ENCODE measurements at regions of chr3 and their contacts with region 1.

Region 1: DNA sequence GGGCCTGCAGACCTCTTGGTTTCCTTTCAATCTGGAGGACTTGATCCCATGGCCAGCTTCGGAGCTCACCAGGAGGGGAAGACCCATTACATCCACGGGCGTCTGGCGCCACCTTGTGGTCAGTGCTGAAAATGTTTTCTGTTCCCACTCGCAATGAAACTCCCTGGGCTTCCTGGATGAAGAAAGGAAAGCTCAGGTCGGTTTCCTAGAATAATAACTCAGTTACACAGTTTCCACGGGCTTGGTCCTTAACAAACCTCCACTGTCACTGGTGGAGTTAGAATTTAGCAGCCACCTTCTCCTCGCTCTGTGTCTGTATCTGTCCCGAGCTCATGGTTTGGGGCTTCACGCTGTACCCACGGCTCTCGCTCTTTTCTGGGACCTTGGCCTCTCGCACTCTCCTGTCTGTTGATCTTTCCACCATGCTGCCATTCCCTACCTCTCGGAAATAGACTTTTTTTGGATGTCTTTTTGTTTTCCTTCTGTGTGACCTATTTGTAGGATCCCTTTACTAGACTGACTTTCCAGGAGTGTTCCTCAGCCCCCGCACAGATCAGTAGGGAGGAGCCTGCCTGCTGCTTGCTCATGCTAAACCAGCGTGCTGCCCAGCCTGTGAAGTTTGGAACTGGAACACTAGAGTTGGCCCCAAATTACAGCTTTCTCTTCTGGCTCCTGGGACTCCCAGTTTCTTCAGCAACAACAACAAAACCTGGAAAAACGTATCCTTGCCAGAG is 56.3 kb downstream of the IL20RB start:
- DNase-seq: peak; percentile 67 to 91 (median 82)
- ATAC-seq: peak; percentile 89
- H3K4me3 ChIP-seq: peak overlapping the region; percentile 42
- H3K4me3 Mint-ChIP-seq: peak overlapping the region; percentile 67
- H3K27ac ChIP-seq: no peak overlapping the region
- H3K27ac Mint-ChIP-seq: no peak overlapping the region
- H3K4me1 ChIP-seq: peaks cover 9% of the 10 kb centered on the region
- H3K4me1 Mint-ChIP-seq: peaks cover 9% of the 10 kb centered on the region
- H3K27me3 ChIP-seq: no peaks in the 10 kb centered on the region
- H3K27me3 Mint-ChIP-seq: no peaks in the 10 kb centered on the region
- CTCF ChIP-seq: peak; percentile 87

Region 2: GRCh38 chr3:136255672-136256406 is 758.3 kb before region 1 on chr3:
- CTCF ChIA-PET with region 1: no interaction called
- POLR2A ChIA-PET with region 1: no interaction called
- intact Hi-C with region 1: loop called in 1 of 2 experiments (anchors 5 kb)
- DNase-seq: no peak
- ATAC-seq: no peak
- H3K4me3 ChIP-seq: no peak overlapping the region
- H3K4me3 Mint-ChIP-seq: no peak overlapping the region
- H3K27ac ChIP-seq: no peak overlapping the region
- H3K27ac Mint-ChIP-seq: no peak overlapping the region
- H3K4me1 ChIP-seq: peaks cover 14% of the 10 kb centered on the region
- H3K4me1 Mint-ChIP-seq: peaks cover 17% of the 10 kb centered on the region
- H3K27me3 ChIP-seq: no peaks in the 10 kb centered on the region
- H3K27me3 Mint-ChIP-seq: no peaks in the 10 kb centered on the region
- CTCF ChIP-seq: no peak

Region 3: GRCh38 chr3:136305878-136306277 is 708.2 kb before region 1 on chr3:
- CTCF ChIA-PET with region 1: interaction called, 10 read pairs
- POLR2A ChIA-PET with region 1: no interaction called
- intact Hi-C with region 1: loop called in 1 of 2 experiments (anchors 10 kb)
- DNase-seq: no peak
- ATAC-seq: no peak
- H3K4me3 ChIP-seq: no peak overlapping the region
- H3K4me3 Mint-ChIP-seq: no peak overlapping the region
- H3K27ac ChIP-seq: no peak overlapping the region
- H3K27ac Mint-ChIP-seq: no peak overlapping the region
- H3K4me1 ChIP-seq: no peaks in the 10 kb centered on the region
- H3K4me1 Mint-ChIP-seq: no peaks in the 10 kb centered on the region
- H3K27me3 ChIP-seq: no peaks in the 10 kb centered on the region
- H3K27me3 Mint-ChIP-seq: no peaks in the 10 kb centered on the region
- CTCF ChIP-seq: no peak

Region 4: GRCh38 chr3:136390574-136390973 is 623.5 kb before region 1 on chr3:
- CTCF ChIA-PET with region 1: interaction called, 29 read pairs
- POLR2A ChIA-PET with region 1: interaction called, 3 read pairs
- intact Hi-C with region 1: loop called (anchors 2 kb)
- DNase-seq: no peak
- ATAC-seq: no peak
- H3K4me3 ChIP-seq: no peak overlapping the region
- H3K4me3 Mint-ChIP-seq: no peak overlapping the region
- H3K27ac ChIP-seq: no peak overlapping the region
- H3K27ac Mint-ChIP-seq: no peak overlapping the region
- H3K4me1 ChIP-seq: peaks cover 3% of the 10 kb centered on the region
- H3K4me1 Mint-ChIP-seq: no peaks in the 10 kb centered on the region
- H3K27me3 ChIP-seq: no peaks in the 10 kb centered on the region
- H3K27me3 Mint-ChIP-seq: no peaks in the 10 kb centered on the region
- CTCF ChIP-seq: no peak

Region 5: GRCh38 chr3:136545664-136546268 is 468.4 kb before region 1 on chr3:
- CTCF ChIA-PET with region 1: interaction called, 5 read pairs
- POLR2A ChIA-PET with region 1: no interaction called
- intact Hi-C with region 1: loop called in 1 of 2 experiments (anchors 5 kb)
- DNase-seq: peak in 1 of 14 experiments; percentile 11
- ATAC-seq: no peak
- H3K4me3 ChIP-seq: no peak overlapping the region
- H3K4me3 Mint-ChIP-seq: no peak overlapping the region
- H3K27ac ChIP-seq: no peak overlapping the region
- H3K27ac Mint-ChIP-seq: no peak overlapping the region
- H3K4me1 ChIP-seq: no peaks in the 10 kb centered on the region
- H3K4me1 Mint-ChIP-seq: peaks cover 43% of the 10 kb centered on the region
- H3K27me3 ChIP-seq: no peaks in the 10 kb centered on the region
- H3K27me3 Mint-ChIP-seq: no peaks in the 10 kb centered on the region
- CTCF ChIP-seq: no peak

Region 6: DNA sequence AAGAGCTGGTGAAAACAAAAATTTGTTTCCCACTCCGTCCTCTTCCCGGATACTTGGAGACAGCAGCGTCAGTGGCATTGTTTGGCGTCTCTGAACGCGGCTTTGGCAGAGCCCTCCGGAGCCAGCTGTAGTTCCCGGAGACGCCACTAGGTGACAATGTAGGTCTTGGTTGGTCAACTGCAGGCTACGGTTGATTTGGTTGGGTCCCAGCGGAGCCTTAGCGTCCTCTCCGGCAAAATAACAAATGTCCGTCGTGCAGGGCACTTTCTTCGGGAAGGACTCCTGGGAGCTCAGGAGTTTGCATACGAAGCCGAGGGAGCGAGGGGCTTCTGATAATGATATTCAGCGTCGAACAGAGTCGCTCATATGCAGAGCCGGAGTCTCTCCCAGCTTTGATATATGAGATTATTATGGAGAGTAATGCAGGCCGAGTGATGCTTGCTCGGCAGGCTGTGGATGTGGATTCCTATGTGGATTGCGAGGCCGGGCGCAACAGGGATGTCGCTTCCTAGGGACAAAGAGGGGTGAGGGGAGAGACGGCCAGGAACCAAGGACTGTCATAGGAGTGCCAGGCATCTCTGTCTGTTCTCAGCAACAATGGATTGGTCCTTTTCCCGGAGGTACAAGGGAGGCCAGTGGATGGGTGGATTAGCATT is 18.5 kb after region 1 on chr3:
- CTCF ChIA-PET with region 1: interaction called, 10 read pairs
- POLR2A ChIA-PET with region 1: no interaction called
- intact Hi-C with region 1: no loop called
- DNase-seq: peak; percentile 52 to 85 (median 66)
- ATAC-seq: peak; percentile 81
- H3K4me3 ChIP-seq: peak overlapping the region; percentile 28
- H3K4me3 Mint-ChIP-seq: peak overlapping the region; percentile 71
- H3K27ac ChIP-seq: no peak overlapping the region
- H3K27ac Mint-ChIP-seq: no peak overlapping the region
- H3K4me1 ChIP-seq: peaks cover 8% of the 10 kb centered on the region
- H3K4me1 Mint-ChIP-seq: peaks cover 9% of the 10 kb centered on the region
- H3K27me3 ChIP-seq: peaks cover 5 to 20% of the 10 kb centered on the region in 2 experiments
- H3K27me3 Mint-ChIP-seq: peaks cover 38% of the 10 kb centered on the region
- CTCF ChIP-seq: peak; percentile 99

Region 7: DNA sequence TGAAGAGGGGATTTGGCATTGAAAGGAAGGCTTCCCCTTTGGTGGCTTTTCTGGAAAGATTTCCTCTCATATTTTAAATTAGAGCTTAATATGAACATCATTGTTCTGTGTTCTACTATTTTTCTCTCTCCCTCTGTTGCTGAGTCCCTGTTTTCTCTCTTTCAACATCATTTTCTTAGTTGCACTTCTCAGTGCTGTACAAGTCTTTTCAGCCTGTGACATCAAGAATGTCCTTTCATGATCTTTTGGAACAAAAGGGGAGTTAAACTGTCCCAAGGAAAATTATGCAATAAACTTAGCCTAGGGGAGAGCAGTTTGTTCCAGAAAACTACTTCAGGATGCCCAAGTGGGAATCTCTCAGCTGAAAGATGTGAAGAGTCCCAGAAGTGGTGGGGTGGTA is 268.7 kb after region 1 on chr3:
- CTCF ChIA-PET with region 1: no interaction called
- POLR2A ChIA-PET with region 1: no interaction called
- intact Hi-C with region 1: no loop called
- DNase-seq: no peak
- ATAC-seq: no peak
- H3K4me3 ChIP-seq: no peak overlapping the region
- H3K4me3 Mint-ChIP-seq: no peak overlapping the region
- H3K27ac ChIP-seq: no peak overlapping the region
- H3K27ac Mint-ChIP-seq: no peak overlapping the region
- H3K4me1 ChIP-seq: no peaks in the 10 kb centered on the region
- H3K4me1 Mint-ChIP-seq: no peaks in the 10 kb centered on the region
- H3K27me3 ChIP-seq: no peaks in the 10 kb centered on the region
- H3K27me3 Mint-ChIP-seq: peaks cover 4% of the 10 kb centered on the region
- CTCF ChIP-seq: no peak

Region 8: DNA sequence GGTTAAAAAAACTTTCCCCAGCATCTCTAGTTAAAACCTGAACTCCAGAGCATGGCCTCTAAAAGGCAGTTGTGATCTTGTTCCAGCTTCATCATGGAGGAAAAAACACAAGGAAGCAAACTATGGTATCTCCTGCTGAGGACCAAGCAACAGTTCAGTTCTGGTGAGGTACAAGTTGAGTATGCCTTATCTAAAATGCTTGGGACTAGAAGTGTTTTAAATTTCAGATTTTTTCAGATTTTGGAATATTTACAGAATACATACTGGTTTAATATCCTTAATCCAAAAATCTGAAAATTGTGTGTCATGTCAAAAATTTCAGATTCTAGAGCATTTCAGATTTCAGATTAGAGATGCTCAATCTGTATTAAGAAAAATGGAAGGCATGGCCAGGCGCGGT is 1150.9 kb after region 1 on chr3:
- CTCF ChIA-PET with region 1: no interaction called
- POLR2A ChIA-PET with region 1: no interaction called
- intact Hi-C with region 1: no loop called
- DNase-seq: no peak
- ATAC-seq: no peak
- H3K4me3 ChIP-seq: no peak overlapping the region
- H3K4me3 Mint-ChIP-seq: no peak overlapping the region
- H3K27ac ChIP-seq: no peak overlapping the region
- H3K27ac Mint-ChIP-seq: no peak overlapping the region
- H3K4me1 ChIP-seq: no peaks in the 10 kb centered on the region
- H3K4me1 Mint-ChIP-seq: peaks cover 16% of the 10 kb centered on the region
- H3K27me3 ChIP-seq: no peaks in the 10 kb centered on the region
- H3K27me3 Mint-ChIP-seq: no peaks in the 10 kb centered on the region
- CTCF ChIP-seq: no peak

Measured in CD4-positive, alpha-beta T cell (primary cell).